Activated naive CD4-positive, alpha-beta T cell treated with anti-CD3 and anti-CD28 coated beads, Interleukin-2, amount 10 ng/mL, durations not matched to agents 7 days and 5 days (primary cell): ENCODE measurements at regions of chr7 and their contacts with region 1.

Region 1: GRCh38 chr7:28364082-28364481 is 48.2 kb upstream of the CREB5 start:
- DNase-seq: no peak
- H3K4me3 Mint-ChIP-seq: no peak overlapping the region
- H3K27ac Mint-ChIP-seq: no peak overlapping the region
- H3K4me1 Mint-ChIP-seq: no peaks in the 10 kb centered on the region
- H3K27me3 Mint-ChIP-seq: no peaks in the 10 kb centered on the region

Region 2: GRCh38 chr7:28296571-28297483 is 67.3 kb before region 1 on chr7:
- CTCF ChIA-PET with region 1: interaction called, 20 read pairs
- DNase-seq: peak; percentile 64
- H3K4me3 Mint-ChIP-seq: no peak overlapping the region
- H3K27ac Mint-ChIP-seq: no peak overlapping the region
- H3K4me1 Mint-ChIP-seq: peaks cover 6% of the 10 kb centered on the region
- H3K27me3 Mint-ChIP-seq: peaks cover 4% of the 10 kb centered on the region

Region 3: DNA sequence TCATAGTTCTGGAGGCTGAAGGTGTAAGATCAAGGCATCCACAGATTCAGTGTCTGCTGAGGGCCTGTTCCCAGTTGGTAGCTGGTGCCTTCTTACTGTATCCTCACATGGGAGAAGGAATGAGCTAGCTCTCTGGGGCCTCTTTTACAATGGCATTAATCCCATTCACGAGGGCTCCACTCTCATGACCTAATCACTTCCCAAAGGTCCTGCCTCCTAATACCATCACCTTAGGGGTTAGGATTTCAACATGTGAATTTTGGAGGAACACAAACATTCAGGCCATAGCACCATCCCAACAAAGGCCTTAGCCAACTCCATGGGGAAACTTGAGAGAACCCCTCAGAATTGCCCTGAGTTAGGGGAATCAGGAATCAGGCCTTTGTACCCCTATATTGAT is 17.8 kb before region 1 on chr7:
- CTCF ChIA-PET with region 1: no interaction called
- DNase-seq: no peak
- H3K4me3 Mint-ChIP-seq: no peak overlapping the region
- H3K27ac Mint-ChIP-seq: no peak overlapping the region
- H3K4me1 Mint-ChIP-seq: no peaks in the 10 kb centered on the region
- H3K27me3 Mint-ChIP-seq: peaks cover 7% of the 10 kb centered on the region

Region 4: GRCh38 chr7:28378574-28379149 is 14.6 kb after region 1 on chr7:
- CTCF ChIA-PET with region 1: no interaction called
- DNase-seq: no peak
- H3K4me3 Mint-ChIP-seq: no peak overlapping the region
- H3K27ac Mint-ChIP-seq: no peak overlapping the region
- H3K4me1 Mint-ChIP-seq: no peaks in the 10 kb centered on the region
- H3K27me3 Mint-ChIP-seq: no peaks in the 10 kb centered on the region

Region 5: GRCh38 chr7:29035044-29035740 is 671.1 kb after region 1 on chr7:
- CTCF ChIA-PET with region 1: no interaction called
- DNase-seq: no peak
- H3K4me3 Mint-ChIP-seq: no peak overlapping the region
- H3K27ac Mint-ChIP-seq: no peak overlapping the region
- H3K4me1 Mint-ChIP-seq: peaks cover 5% of the 10 kb centered on the region
- H3K27me3 Mint-ChIP-seq: no peaks in the 10 kb centered on the region